ENCODE measurements at regions of chr1 and their contacts with region 1.

Region 1: DNA sequence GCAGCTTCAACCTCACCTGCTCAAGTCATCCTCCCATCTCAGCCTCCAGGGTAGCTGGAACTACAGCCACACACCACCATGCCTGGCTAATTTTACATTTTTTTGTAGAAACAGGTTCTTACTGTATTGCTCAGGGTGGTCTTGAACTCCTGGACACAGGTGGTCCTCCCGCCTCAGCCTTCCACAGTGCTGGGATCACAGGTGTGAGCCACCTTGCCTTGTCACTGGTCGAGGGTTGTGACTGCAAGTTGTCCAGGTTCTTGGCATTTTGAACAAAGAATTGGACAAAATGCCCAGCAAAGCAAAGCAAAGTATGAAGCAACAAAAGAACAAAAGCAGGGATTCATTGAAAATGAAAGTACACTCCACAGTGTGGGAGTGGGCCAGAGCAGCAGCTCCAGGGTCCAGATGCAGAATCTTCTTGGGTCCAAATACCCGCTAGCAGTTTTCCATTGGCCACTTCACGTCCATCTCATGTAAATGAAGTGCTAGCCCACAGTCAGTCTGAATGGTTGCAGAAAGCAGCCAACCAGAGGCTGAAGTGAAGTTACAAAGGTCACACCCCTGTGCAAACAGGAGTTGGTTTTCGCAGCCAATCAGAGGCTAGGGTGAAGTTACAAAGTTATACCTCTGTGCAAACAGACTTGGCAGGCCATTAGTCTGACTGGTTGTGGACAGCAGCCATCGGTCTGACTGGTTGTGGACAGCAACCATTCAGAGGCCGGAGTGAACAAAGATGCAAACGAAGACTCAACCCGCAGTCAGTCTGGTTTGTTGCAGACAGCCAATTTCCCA is 109.5 kb upstream of the KIF26B start:
- DNase-seq: no peak
- H3K4me3 ChIP-seq: no peak overlapping the region
- H3K27ac ChIP-seq: no peak overlapping the region
- H3K4me1 ChIP-seq: peaks cover 0 to 9% (median 0%) of the 10 kb centered on the region in 4 experiments
- H3K27me3 ChIP-seq: no peaks in the 10 kb centered on the region

Region 2: DNA sequence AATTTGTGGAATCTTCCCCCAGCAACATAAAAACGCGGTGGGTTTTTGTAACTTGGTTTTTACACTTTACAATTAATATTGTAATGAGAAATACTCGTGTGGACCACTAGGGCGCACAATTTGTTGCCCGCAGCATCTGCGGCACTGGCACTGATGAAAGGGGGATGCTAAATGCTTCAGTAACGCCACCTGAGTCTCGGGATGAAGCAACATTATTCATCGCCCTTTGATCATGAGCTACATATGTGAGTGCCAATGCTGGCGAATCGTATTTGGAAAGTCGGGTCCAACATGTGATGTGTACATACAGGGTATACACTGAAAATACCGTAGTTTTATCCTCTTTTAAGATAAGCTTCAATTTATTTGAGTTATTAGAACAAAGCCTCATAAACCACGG is 244.0 kb before region 1 on chr1:
- CTCF ChIA-PET with region 1: interaction called, 36 read pairs
- POLR2A ChIA-PET with region 1: no interaction called
- DNase-seq: peak; percentile 76 to 82 (median 78)
- H3K4me3 ChIP-seq: peak overlapping the region in 1 of 7 experiments; percentile 11
- H3K27ac ChIP-seq: no peak overlapping the region
- H3K4me1 ChIP-seq: peaks cover 0 to 9% (median 2%) of the 10 kb centered on the region in 4 experiments
- H3K27me3 ChIP-seq: peaks cover 0 to 15% (median 2%) of the 10 kb centered on the region in 5 experiments

Region 3: DNA sequence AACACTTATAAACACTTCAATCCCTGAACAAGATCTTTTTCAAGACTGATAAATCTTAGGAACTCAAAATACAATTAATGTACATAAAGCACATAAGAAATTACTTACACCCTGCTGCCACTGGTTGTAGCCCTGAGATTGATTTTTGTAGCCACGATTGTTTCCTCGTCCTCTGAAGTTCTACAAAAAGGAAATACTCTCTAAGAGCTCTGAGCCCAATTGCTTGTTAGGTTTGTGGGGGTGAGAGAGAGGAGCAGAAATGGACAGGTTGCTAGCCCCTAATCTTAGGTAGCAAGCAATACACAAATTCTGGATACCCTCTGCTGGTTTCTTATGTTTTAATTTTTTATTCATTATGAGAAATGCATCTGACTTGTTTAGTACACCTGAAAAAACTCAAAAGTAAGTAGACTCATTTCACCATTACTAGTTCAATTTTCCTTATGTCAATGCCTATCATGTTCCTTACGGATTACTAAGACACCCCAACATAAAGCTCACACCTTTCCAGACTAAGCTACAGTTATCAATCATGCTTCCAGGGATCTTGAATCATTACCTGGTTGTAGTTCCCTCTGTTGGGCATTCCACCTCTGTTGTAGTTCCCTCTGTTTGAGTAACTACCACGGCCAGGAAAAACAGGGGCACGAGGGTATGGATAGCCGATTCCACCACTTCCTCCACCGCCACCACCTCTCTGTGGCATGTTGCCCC is 190.3 kb before region 1 on chr1:
- CTCF ChIA-PET with region 1: interaction called, 12 read pairs
- POLR2A ChIA-PET with region 1: no interaction called
- DNase-seq: peak in 2 of 3 donors; percentile 37 to 44
- H3K4me3 ChIP-seq: peak overlapping the region in 2 of 7 experiments; percentile 56 to 57
- H3K27ac ChIP-seq: peak overlapping the region in 1 of 2 experiments; percentile 51
- H3K4me1 ChIP-seq: peaks cover 43 to 80% (median 59%) of the 10 kb centered on the region in 4 experiments
- H3K27me3 ChIP-seq: no peaks in the 10 kb centered on the region

Region 4: GRCh38 chr1:244864253-244865027 is 180.8 kb before region 1 on chr1 and contains the start of gene HNRNPU:
- CTCF ChIA-PET with region 1: interaction called, 10 read pairs
- POLR2A ChIA-PET with region 1: no interaction called
- DNase-seq: peak; percentile 97 to 98 (median 98)
- H3K4me3 ChIP-seq: peak within 1 kb of the TSS; percentile 97 to 100 (median 99)
- H3K27ac ChIP-seq: peak within 1 kb of the TSS; percentile 97 to 99
- H3K4me1 ChIP-seq: peaks cover 25 to 56% (median 39%) of the 10 kb centered on the region in 4 experiments
- H3K27me3 ChIP-seq: no peaks in the 10 kb centered on the region

Region 5: DNA sequence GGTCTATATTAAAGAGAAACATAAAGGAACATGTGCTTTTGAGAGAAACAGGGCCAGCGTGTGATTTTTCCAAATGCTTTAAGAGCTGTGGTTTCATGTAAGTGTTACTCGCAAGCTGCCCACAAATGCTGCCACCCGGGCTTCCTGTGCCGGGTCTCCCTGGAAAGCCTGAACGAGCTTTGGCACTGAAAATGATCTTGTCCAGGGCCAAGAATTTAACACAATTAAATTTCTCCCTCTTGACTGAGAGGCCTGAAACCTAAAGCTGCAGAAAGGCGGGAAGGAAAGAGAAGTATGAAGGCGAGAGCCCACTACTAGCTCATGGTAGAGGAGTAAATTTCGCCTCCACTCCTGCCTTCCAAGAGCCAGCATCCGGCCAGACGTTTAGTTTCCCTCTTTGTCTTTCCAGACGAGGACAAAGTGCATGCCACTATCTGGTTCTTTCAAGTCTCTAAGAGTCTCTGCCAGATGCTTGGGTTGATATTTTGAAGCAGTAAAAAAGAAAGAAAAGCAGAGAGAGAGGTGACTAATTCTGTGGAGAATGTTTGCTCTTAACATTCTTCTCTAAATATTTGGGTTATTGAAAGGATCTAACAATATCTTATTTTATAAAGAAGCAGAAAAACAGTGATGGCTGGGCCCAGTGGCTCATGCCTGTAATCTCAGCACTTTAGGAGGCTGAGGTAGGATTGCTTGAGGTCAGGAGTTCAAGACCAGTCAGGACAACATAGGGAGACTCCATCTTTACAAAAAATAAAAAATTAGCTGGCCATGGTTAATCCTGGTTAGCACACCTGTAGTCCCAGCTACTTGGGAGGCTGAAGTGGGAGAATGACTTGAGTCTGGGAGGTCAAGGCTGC is 80.9 kb before region 1 on chr1:
- CTCF ChIA-PET with region 1: interaction called, 12 read pairs
- POLR2A ChIA-PET with region 1: no interaction called
- DNase-seq: peak in 2 of 3 donors; percentile 47 to 57
- H3K4me3 ChIP-seq: no peak overlapping the region
- H3K27ac ChIP-seq: no peak overlapping the region
- H3K4me1 ChIP-seq: peaks cover 12 to 46% (median 27%) of the 10 kb centered on the region in 4 experiments
- H3K27me3 ChIP-seq: no peaks in the 10 kb centered on the region

Region 6: DNA sequence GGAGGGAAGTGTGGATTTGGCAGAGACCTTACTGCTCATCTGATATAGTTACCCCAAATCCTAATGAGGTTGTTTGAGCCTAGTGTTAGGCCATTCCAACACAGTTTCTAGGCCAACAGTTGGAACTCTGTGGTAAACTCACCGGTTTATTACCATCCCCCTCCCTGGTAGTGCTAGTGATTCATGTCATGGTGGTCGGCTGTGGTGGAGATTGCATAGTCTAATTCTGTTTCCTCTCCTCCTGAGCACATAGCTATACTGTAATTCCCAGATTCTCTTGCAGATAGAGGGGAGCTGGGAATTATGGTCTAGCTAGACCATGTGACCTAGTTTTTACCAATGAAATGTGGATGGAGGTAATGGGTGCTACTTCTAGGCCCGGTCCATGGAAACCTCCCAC is 14.2 kb before region 1 on chr1:
- CTCF ChIA-PET with region 1: interaction called, 18 read pairs
- POLR2A ChIA-PET with region 1: no interaction called
- DNase-seq: no peak
- H3K4me3 ChIP-seq: no peak overlapping the region
- H3K27ac ChIP-seq: no peak overlapping the region
- H3K4me1 ChIP-seq: peaks cover 0 to 9% (median 4%) of the 10 kb centered on the region in 4 experiments
- H3K27me3 ChIP-seq: no peaks in the 10 kb centered on the region

Region 7: DNA sequence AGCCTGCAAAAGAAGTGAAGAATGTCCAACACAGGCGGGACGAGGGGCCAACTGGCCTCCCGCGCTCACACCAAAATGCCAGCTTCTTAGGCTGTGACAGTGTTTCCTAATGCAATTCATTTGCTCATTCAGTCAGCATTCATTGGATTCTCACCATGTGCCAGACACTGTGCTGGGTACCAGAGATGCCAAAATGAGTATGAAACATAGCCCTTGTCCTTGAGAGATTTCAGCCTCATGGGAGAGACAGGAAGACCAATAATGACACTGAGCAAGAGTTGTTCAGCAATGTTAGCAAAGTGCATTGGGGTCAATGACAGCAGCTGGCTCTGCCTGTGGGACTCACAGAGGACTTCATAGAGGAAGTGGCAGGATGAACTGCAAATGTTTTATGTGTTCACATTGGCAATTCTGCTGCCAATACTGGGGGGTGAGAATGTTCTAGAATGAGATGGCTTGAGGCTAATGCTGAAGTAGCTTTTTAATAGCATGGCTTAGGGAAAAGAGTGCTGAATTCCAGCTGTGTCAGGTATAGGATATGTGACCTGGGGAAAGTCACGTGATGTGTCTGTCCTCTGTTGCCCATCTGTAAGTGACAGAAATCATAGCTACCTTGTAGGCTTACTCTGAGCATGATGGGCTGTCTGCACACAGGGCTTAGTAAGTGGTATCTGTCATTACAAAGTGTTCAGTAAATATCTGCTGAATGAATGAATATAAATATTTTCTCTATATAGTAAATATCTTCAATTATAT is 51.2 kb after region 1 on chr1:
- CTCF ChIA-PET with region 1: no interaction called
- POLR2A ChIA-PET with region 1: no interaction called
- DNase-seq: no peak
- H3K4me3 ChIP-seq: no peak overlapping the region
- H3K27ac ChIP-seq: no peak overlapping the region
- H3K4me1 ChIP-seq: no peaks in the 10 kb centered on the region
- H3K27me3 ChIP-seq: no peaks in the 10 kb centered on the region

Measured in common myeloid progenitor, CD34-positive (primary cell).